ENCODE measurements at regions of chr19 and their contacts with region 1.

Region 1: DNA sequence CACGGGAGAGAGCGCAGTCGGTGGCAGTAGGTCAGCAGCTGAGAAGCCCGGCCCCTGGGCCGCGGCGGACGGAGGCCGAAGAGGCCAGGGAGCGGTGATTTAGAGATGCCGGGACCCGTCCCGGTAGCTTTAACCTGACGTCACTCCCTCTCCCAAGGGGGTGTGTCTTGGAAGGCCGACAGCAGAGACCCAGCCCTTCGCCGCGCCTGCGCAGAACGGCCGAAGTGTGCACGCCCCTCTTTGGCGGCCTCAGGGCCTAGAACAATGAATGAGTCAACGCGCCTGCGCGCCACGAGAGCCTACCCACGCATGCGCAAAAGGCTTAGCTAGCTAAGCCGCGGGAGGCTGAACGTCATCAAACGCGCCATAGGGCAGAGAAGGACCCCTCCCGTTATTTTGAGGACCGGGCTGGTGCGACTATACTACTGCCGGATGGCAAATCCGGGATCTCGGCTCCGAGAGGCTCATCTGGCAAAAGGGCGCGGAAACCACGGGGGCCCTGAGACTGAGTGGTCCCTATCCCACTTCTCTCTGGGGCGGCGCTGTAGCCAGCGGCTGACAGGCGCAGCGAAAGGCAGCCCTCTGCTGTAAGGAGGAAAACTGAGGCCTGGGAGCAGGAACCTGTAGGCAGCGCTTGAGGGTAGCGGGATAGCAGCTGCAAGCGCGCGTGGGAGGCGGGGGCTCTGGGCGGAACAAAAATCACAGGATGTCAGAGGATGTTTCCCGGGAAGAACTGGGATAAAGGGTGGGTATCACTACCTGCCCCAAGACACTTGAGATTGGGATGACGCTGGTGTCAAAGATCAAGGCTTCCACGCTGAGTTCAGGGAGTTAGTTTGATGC is at the starts of genes IRGQ and ZNF576:
- DNase-seq: peak; percentile 99 to 100 (median 100)
- H3K4me3 ChIP-seq: peak within 1 kb of the TSS; percentile 71
- H3K4me3 Mint-ChIP-seq: peak within 1 kb of the TSS; percentile 89 to 98 (median 96)
- H3K27ac ChIP-seq: peak within 1 kb of the TSS; percentile 96
- H3K27ac Mint-ChIP-seq: peak within 1 kb of the TSS; percentile 99 to 100 (median 100)
- H3K4me1 ChIP-seq: peaks cover 38% of the 10 kb centered on the region
- H3K4me1 Mint-ChIP-seq: peaks cover 39 to 50% (median 43%) of the 10 kb centered on the region in 3 donors
- H3K27me3 ChIP-seq: no peaks in the 10 kb centered on the region
- H3K27me3 Mint-ChIP-seq: peaks cover 0 to 4% of the 10 kb centered on the region in 2 donors
- total RNA-seq, gene IRGQ: 25.4 to 30.2 TPM
- total RNA-seq, gene ZNF576: 19.5 to 20.9 TPM

Region 2: DNA sequence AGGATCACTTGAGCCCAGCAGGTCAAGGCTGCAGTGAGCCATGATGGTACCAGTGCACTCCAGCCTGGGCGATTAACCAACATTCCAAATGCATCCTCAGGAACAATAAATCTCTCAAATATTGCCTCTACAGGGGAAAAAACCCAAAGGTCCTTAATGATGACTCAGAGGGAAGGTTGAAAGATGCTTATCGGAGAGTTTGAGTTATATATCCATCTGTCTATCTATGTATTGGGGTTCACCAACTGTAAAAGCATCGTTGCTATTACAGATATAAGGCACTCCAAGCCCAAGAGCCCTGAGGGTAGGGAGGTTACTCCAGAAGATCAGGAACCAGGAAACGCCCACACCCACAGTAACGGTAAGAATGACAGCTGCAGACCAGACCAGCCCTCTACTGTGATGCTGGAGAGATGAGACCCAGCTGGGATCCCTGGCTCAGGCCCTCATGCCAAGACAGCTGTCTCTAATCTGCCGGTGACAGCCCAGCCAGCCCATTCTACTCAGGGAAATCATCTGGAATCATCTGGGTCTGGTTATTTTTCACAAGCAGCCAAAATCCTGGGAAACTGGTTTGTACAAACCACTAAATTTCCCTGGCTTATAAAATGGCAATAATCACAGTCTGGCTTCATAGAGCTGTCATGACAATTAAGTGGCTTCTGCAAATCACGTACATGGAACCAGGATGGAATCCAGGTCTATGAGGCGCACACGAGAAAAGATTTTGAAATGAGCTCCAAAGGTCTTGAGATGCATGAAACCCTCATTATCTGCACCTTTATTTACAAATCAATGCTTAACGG is 157.7 kb before region 1 on chr19:
- CTCF ChIA-PET with region 1: interaction called, 25 read pairs
- POLR2A ChIA-PET with region 1: interaction called, 3 read pairs
- DNase-seq: no peak
- H3K4me3 ChIP-seq: peak overlapping the region; percentile 68
- H3K4me3 Mint-ChIP-seq: peak overlapping the region in 6 of 7 donors; percentile 13 to 74 (median 64)
- H3K27ac ChIP-seq: peak overlapping the region; percentile 87
- H3K27ac Mint-ChIP-seq: peak overlapping the region; percentile 77 to 96 (median 94)
- H3K4me1 ChIP-seq: peaks cover 39% of the 10 kb centered on the region
- H3K4me1 Mint-ChIP-seq: peaks cover 44 to 58% (median 55%) of the 10 kb centered on the region in 3 donors
- H3K27me3 ChIP-seq: no peaks in the 10 kb centered on the region
- H3K27me3 Mint-ChIP-seq: no peaks in the 10 kb centered on the region

Region 3: GRCh38 chr19:43519436-43520088 is 76.7 kb before region 1 on chr19:
- CTCF ChIA-PET with region 1: interaction called, 21 read pairs
- POLR2A ChIA-PET with region 1: interaction called, 6 read pairs
- DNase-seq: peak; percentile 65 to 85 (median 74)
- H3K4me3 ChIP-seq: no peak overlapping the region
- H3K4me3 Mint-ChIP-seq: no peak overlapping the region
- H3K27ac ChIP-seq: no peak overlapping the region
- H3K27ac Mint-ChIP-seq: peak overlapping the region; percentile 1 to 94 (median 26)
- H3K4me1 ChIP-seq: peaks cover 4% of the 10 kb centered on the region
- H3K4me1 Mint-ChIP-seq: peaks cover 11 to 17% (median 16%) of the 10 kb centered on the region in 3 donors
- H3K27me3 ChIP-seq: no peaks in the 10 kb centered on the region
- H3K27me3 Mint-ChIP-seq: no peaks in the 10 kb centered on the region

Region 4: DNA sequence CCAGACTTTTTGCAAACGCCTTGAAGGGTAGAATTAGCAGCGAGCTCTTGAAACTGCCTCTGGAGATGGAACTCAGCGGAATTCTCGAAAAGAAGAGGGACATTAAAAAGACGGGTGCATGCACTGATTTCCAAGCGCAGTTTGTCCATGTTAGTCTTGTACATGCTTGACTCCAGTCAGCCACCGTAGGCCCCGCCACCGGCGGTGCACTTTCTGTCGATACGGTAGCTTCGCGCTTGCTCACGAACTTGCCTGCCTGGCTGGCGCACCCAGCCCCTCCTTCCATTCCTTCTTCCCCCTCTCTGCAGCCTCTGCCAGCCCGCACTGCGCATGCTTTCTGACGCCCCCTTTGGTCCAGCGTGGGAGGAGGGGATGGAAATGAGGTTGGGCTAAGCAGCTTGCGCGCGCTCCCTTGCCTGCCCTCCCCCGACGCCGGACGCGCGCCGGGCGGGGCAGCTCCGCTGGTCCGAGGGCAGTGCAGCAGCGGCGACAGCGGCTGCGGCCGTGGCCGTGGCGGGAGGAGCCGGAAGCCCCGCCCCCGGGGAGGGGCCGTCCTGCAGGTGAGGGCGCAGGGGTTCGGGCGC is 63.2 kb before region 1 on chr19 and contains the start of gene ZNF575:
- CTCF ChIA-PET with region 1: interaction called, 50 read pairs
- POLR2A ChIA-PET with region 1: interaction called, 9 read pairs
- DNase-seq: peak; percentile 70 to 89 (median 81)
- H3K4me3 ChIP-seq: peak within 1 kb of the TSS; percentile 98
- H3K4me3 Mint-ChIP-seq: peak within 1 kb of the TSS; percentile 87 to 99 (median 92)
- H3K27ac ChIP-seq: peak within 1 kb of the TSS; percentile 79
- H3K27ac Mint-ChIP-seq: peak within 1 kb of the TSS; percentile 89 to 99 (median 96)
- H3K4me1 ChIP-seq: peaks cover 8% of the 10 kb centered on the region
- H3K4me1 Mint-ChIP-seq: peaks cover 18 to 22% (median 21%) of the 10 kb centered on the region in 3 donors
- H3K27me3 ChIP-seq: no peaks in the 10 kb centered on the region
- H3K27me3 Mint-ChIP-seq: no peaks in the 10 kb centered on the region
- total RNA-seq, gene ZNF575: 2.1 to 2.3 TPM

Region 5: GRCh38 chr19:43562698-43563241 is 33.5 kb before region 1 on chr19:
- CTCF ChIA-PET with region 1: interaction called, 124 read pairs
- POLR2A ChIA-PET with region 1: interaction called, 8 read pairs
- DNase-seq: peak; percentile 74 to 93 (median 79)
- H3K4me3 ChIP-seq: peak overlapping the region; percentile 70
- H3K4me3 Mint-ChIP-seq: peak overlapping the region; percentile 32 to 82 (median 68)
- H3K27ac ChIP-seq: peak overlapping the region; percentile 75
- H3K27ac Mint-ChIP-seq: peak overlapping the region; percentile 89 to 98 (median 94)
- H3K4me1 ChIP-seq: peaks cover 47% of the 10 kb centered on the region
- H3K4me1 Mint-ChIP-seq: peaks cover 47 to 61% (median 60%) of the 10 kb centered on the region in 3 donors
- H3K27me3 ChIP-seq: no peaks in the 10 kb centered on the region
- H3K27me3 Mint-ChIP-seq: peaks cover 0 to 3% of the 10 kb centered on the region in 2 donors

Region 6: DNA sequence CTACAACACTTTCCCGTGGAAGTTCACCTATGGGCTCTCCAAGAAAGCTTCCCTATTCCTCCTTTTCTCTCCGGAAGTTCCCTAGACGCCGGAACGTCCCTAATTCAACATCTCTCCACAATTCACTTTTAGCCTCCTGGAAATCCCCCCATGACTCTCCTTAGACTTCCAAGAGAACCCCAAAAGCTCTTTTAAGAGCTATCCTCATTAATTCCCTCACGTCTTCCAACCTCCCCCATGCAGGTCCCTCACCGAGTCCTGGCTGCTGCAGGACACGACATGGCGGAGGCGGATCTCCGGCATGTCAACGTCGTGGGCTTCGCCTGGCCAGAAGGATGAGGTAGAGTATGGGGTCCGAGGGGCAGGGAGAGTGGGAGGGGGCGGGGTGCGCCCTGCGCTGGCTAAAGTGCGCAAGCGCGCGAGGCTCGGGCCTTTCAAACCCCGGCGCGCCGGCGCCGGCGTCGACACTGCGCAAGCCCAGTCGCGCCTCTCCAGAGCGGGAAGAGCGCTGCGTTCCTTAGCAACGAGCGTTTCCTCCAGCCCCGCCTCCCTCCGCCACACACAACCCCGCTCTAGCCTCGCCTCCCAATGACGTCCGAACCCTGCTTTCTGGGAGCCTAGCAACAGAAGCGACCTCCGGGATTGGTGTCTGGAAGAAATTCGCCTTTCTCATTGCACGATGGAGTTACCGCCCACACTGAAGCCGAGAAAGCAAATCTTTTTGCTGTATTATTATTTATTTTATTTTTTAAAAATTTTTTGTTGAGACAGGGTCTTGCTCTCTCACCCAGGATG is 20.9 kb before region 1 on chr19 and contains the starts of genes PINLYP and XRCC1:
- CTCF ChIA-PET with region 1: interaction called, 15 read pairs
- POLR2A ChIA-PET with region 1: interaction called, 19 read pairs
- DNase-seq: peak; percentile 95 to 99 (median 96)
- H3K4me3 ChIP-seq: peak within 1 kb of the TSS; percentile 94
- H3K4me3 Mint-ChIP-seq: peak within 1 kb of the TSS; percentile 95 to 99 (median 96)
- H3K27ac ChIP-seq: peak within 1 kb of the TSS; percentile 96
- H3K27ac Mint-ChIP-seq: peak within 1 kb of the TSS; percentile 98 to 100 (median 98)
- H3K4me1 ChIP-seq: peaks cover 20% of the 10 kb centered on the region
- H3K4me1 Mint-ChIP-seq: peaks cover 37 to 79% (median 56%) of the 10 kb centered on the region in 3 donors
- H3K27me3 ChIP-seq: no peaks in the 10 kb centered on the region
- H3K27me3 Mint-ChIP-seq: no peaks in the 10 kb centered on the region
- total RNA-seq, gene PINLYP: 9.9 to 13.8 TPM
- total RNA-seq, gene XRCC1: 37.0 to 37.2 TPM

Measured in CD8-positive, alpha-beta memory T cell (primary cell).